CD8-positive, alpha-beta T cell (primary cell): ENCODE measurements at regions of chr2 and their contacts with region 1.

Region 1: GRCh38 chr2:12416600-12416999 is 300.1 kb upstream of the TRIB2 start:
- DNase-seq: peak; percentile 34 to 78 (median 58)
- ATAC-seq: peak; percentile 62
- H3K4me3 ChIP-seq: no peak overlapping the region
- H3K4me3 Mint-ChIP-seq: no peak overlapping the region
- H3K27ac ChIP-seq: no peak overlapping the region
- H3K27ac Mint-ChIP-seq: peak overlapping the region; percentile 5
- H3K4me1 ChIP-seq: peaks cover 20% of the 10 kb centered on the region
- H3K4me1 Mint-ChIP-seq: peaks cover 34% of the 10 kb centered on the region
- H3K27me3 ChIP-seq: no peaks in the 10 kb centered on the region
- H3K27me3 Mint-ChIP-seq: no peaks in the 10 kb centered on the region
- CTCF ChIP-seq: peak; percentile 43

Region 2: GRCh38 chr2:12479065-12479601 is 62.5 kb after region 1 on chr2:
- CTCF ChIA-PET with region 1: no interaction called
- POLR2A ChIA-PET with region 1: no interaction called
- intact Hi-C with region 1: no loop called
- DNase-seq: no peak
- ATAC-seq: no peak
- H3K4me3 ChIP-seq: no peak overlapping the region
- H3K4me3 Mint-ChIP-seq: no peak overlapping the region
- H3K27ac ChIP-seq: no peak overlapping the region
- H3K27ac Mint-ChIP-seq: no peak overlapping the region
- H3K4me1 ChIP-seq: no peaks in the 10 kb centered on the region
- H3K4me1 Mint-ChIP-seq: peaks cover 3% of the 10 kb centered on the region
- H3K27me3 ChIP-seq: no peaks in the 10 kb centered on the region
- H3K27me3 Mint-ChIP-seq: no peaks in the 10 kb centered on the region
- CTCF ChIP-seq: no peak

Region 3: DNA sequence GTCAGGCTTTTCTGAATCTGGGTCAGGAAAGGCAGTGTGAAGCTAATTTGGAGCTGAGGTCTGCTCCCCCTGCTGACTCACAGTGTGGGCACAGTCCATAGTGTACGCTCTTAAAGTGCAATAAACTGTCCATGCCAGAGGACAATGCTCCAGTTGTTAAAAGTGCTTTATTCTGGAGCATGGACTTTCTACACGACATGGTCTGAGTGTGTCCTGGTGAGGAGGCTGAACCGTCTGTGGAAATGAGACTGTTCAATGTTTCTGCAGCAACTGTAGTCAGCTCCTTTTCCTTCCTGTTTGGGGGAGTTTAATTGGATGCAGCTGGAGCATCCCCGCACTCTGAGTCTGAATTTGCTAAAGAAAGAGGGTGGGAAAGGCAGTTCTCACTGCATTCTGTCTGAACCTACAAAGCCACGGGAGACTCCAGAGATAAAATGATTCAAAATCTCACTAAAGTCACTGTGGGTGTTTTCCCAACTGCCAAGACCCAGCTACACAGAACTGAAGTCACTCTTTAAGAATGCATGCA is 189.9 kb after region 1 on chr2:
- CTCF ChIA-PET with region 1: interaction called, 4 read pairs
- POLR2A ChIA-PET with region 1: no interaction called
- intact Hi-C with region 1: loop called in 1 of 2 experiments (anchors 1 kb)
- DNase-seq: peak in 2 of 9 experiments; percentile 24 to 27
- ATAC-seq: no peak
- H3K4me3 ChIP-seq: no peak overlapping the region
- H3K4me3 Mint-ChIP-seq: no peak overlapping the region
- H3K27ac ChIP-seq: no peak overlapping the region
- H3K27ac Mint-ChIP-seq: no peak overlapping the region
- H3K4me1 ChIP-seq: peaks cover 8% of the 10 kb centered on the region
- H3K4me1 Mint-ChIP-seq: peaks cover 17% of the 10 kb centered on the region
- H3K27me3 ChIP-seq: no peaks in the 10 kb centered on the region
- H3K27me3 Mint-ChIP-seq: no peaks in the 10 kb centered on the region
- CTCF ChIP-seq: no peak